ENCODE measurements at regions of chr3 and their contacts with region 1.

Region 1: GRCh38 chr3:168581771-168582225 is 486.1 kb upstream of the GOLIM4 start:
- DNase-seq: no peak
- H3K4me3 ChIP-seq: no peak overlapping the region
- H3K27ac ChIP-seq: no peak overlapping the region
- H3K4me1 ChIP-seq: no peaks in the 10 kb centered on the region
- H3K27me3 ChIP-seq: no peaks in the 10 kb centered on the region
- CTCF ChIP-seq: no peak
- EP300 ChIP-seq: no peak
- POLR2A ChIP-seq: no peak

Region 2: GRCh38 chr3:168534761-168535160 is 47.0 kb before region 1 on chr3:
- intact Hi-C with region 1: no loop called
- DNase-seq: no peak
- H3K4me3 ChIP-seq: no peak overlapping the region
- H3K27ac ChIP-seq: no peak overlapping the region
- H3K4me1 ChIP-seq: no peaks in the 10 kb centered on the region
- H3K27me3 ChIP-seq: no peaks in the 10 kb centered on the region
- CTCF ChIP-seq: no peak
- EP300 ChIP-seq: no peak
- POLR2A ChIP-seq: no peak

Region 3: DNA sequence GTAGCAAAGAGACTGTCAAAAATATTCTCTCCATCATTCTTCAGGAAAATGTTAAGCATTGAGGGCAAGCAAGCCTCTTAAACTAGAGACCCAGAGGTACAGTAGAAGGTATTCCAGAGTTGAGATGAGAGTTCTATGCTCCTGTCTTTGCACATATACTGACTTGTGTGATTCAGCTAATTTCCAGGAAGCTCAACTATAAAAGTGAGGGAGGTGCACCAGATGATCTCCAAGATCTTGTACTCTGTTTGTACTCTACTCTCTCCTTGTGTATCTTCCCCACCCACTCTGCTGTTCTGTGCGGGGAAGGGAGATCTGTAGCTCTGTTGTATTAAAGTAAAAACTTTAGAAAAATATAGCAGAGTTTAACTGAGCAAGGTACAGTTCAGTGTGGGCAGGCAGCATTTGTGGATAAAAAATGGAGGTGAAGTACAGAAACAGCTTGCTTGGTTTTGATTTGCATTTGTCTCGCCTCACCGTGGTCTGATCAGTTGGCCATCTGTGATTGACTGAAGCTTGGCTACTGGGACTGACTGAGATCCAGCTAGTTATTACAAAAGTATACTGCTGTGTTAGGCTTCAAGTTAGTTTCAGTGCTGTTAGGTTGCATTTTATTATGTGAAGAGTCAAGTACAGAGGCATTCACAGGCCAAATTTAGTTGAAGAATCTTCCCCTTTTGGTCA is 22.9 kb before region 1 on chr3:
- intact Hi-C with region 1: loop called in 1 of 4 experiments (anchors 1 kb)
- DNase-seq: no peak
- H3K4me3 ChIP-seq: no peak overlapping the region
- H3K27ac ChIP-seq: no peak overlapping the region
- H3K4me1 ChIP-seq: no peaks in the 10 kb centered on the region
- H3K27me3 ChIP-seq: no peaks in the 10 kb centered on the region
- CTCF ChIP-seq: no peak
- EP300 ChIP-seq: no peak
- POLR2A ChIP-seq: no peak